Posterior cingulate gyrus (tissue), 11 donors: ENCODE measurements at regions of chr6 and their contacts with region 1.

Region 1: GRCh38 chr6:108074359-108075144 is at the start of gene OSTM1:
- DNase-seq: peak; percentile 83 to 99 (median 88)

Region 2: GRCh38 chr6:107957909-107958688 is 116.5 kb before region 1 on chr6 and contains the start of gene SEC63:
- intact Hi-C with region 1: loop called (anchors 1 kb)
- DNase-seq: peak; percentile 96 to 100 (median 98)

Region 3: DNA sequence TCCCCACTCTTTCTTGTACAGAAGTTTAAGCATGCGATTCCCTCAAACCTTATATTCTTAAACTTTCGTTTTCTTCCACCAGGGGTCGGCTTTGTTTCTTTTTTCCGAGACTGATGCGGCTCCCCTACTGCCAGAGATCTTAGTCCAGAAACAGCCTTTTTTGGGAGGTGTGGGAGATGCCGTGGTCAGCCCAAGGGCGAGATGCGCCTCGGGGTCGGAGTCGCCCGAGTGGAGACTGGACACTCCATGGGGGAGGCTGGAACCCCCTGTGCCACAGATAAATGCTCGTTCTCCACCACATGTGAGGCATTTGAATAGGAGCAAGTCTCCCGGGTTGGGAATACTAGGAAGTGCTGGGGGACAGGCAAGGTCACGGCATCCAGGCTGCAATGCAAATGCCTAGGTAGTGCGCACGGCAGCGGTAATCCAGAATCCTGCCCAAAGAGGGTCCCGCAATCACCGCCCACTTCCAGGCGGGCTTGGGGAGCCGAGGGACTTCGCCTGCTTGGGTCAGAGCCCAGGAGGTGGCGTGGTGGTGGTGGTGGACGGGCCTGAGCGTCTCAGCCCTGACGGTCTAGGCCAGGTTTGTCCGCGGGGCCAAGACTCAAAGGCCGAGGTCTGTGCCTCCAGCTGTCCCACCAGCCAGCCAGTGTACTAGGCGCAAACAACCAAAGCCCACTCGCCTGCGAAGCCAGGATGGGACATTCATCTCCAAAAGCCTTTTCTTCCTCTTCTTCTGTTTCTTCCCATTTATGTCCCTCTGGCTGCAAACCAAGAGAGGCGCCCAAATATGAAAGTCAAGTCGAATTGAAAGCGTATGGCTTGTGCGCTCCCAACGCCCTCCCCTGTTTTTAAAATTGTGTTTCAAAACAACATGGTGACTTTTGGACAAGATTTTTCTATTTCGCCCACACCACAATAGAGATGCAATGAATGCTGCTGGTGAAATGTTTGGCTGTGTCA is 39.3 kb after region 1 on chr6:
- intact Hi-C with region 1: no loop called
- DNase-seq: peak in 2 of 10 donors; percentile 22 to 69

Region 4: GRCh38 chr6:108215546-108215945 is 141.0 kb after region 1 on chr6:
- intact Hi-C with region 1: no loop called
- DNase-seq: peak in 1 of 10 donors; percentile 26